ENCODE measurements at regions of chr6 and their contacts with region 1.

Region 1: DNA sequence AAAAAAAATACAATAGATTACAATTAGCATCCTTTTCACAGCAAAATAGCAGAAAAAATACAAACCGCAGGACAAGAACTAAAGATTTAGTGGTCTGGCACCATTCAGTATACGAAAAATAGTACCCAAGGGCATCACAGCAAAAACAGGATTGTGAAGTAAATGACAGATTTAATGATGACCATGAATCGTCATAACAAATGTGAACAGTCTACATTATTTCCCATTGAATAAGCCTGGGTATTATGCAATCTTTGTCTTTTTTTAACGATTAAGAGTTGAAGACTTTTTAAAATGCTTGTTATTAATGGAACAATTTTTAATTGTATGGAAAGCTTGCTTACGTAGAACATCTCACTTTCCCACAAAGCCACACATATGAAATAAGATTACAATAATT is 432.8 kb downstream of the PKHD1 start:
- DNase-seq: no peak
- H3K4me3 ChIP-seq: no peak overlapping the region
- H3K27ac ChIP-seq: no peak overlapping the region
- H3K4me1 ChIP-seq: no peaks in the 10 kb centered on the region
- CTCF ChIP-seq: no peak

Region 2: DNA sequence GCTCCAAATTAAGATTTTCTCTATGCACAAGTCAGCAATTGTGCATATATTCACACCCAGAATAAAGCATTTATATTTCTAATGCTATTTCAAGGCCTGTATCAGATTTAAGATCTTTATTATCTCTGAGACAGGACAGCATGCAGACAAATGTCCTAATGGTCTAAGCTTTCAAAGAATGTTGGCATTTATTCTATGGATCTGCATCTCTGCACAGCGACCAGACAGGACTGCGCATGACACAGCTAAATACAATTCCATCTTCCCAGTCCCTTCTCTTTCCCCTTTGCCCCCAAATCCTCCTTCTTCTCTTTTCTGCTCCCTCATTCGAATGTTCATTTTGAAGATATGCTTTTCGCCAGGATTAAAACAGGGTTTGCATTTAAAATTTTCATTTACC is 45.7 kb before region 1 on chr6:
- CTCF ChIA-PET with region 1: no interaction called
- POLR2A ChIA-PET with region 1: no interaction called
- intact Hi-C with region 1: no loop called
- DNase-seq: no peak
- H3K4me3 ChIP-seq: no peak overlapping the region
- H3K27ac ChIP-seq: no peak overlapping the region
- H3K4me1 ChIP-seq: no peaks in the 10 kb centered on the region
- CTCF ChIP-seq: no peak

Region 3: DNA sequence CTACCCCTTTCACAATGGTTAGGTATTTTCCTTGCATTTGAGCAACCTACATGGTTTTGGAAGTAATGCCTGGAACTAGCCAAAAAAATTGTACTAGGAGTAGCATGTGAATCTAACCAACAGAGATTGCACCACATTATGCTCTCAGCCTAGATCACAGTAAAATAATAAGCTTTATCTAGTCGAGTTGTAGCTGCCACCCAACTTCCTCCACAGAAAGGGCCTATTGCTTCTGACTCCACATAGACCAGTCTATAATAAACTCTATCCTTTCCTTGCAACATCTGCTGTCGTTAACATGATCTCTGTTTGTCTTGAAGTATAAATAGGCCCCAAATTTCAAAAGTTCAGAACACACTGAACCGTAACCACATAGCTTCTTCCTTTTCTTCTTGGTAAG is 57.2 kb after region 1 on chr6:
- CTCF ChIA-PET with region 1: no interaction called
- POLR2A ChIA-PET with region 1: no interaction called
- intact Hi-C with region 1: loop called (anchors 10 kb)
- DNase-seq: no peak
- H3K4me3 ChIP-seq: no peak overlapping the region
- H3K27ac ChIP-seq: no peak overlapping the region
- H3K4me1 ChIP-seq: no peaks in the 10 kb centered on the region
- CTCF ChIP-seq: no peak

Region 4: GRCh38 chr6:51814418-51814817 is 159.8 kb after region 1 on chr6:
- CTCF ChIA-PET with region 1: no interaction called
- POLR2A ChIA-PET with region 1: no interaction called
- intact Hi-C with region 1: no loop called
- DNase-seq: no peak
- H3K4me3 ChIP-seq: no peak overlapping the region
- H3K27ac ChIP-seq: no peak overlapping the region
- H3K4me1 ChIP-seq: no peaks in the 10 kb centered on the region
- CTCF ChIP-seq: no peak

Region 5: DNA sequence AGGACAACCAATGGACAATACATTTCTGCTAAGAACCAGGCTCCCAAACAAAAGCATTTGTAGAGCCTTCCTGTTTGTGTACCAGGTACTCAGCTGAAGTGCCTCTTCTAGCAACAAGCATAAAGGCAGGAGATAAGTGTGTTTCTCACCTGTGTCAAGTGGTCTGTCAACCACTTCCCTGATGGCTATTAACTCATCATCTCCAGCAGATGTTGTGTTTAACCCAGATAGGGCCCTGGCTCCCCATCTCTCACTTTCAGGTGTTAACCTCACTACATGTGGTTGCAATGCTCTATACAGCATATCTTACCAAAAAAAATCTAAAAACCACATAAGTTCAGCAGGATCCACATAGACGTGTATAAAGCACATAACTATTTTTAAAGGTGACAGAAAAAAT is 521.9 kb after region 1 on chr6:
- CTCF ChIA-PET with region 1: no interaction called
- POLR2A ChIA-PET with region 1: no interaction called
- intact Hi-C with region 1: no loop called
- DNase-seq: no peak
- H3K4me3 ChIP-seq: no peak overlapping the region
- H3K27ac ChIP-seq: no peak overlapping the region
- H3K4me1 ChIP-seq: no peaks in the 10 kb centered on the region
- CTCF ChIP-seq: no peak

Measured in OCI-LY7 (cell line).